Naive thymus-derived CD4-positive, alpha-beta T cell (primary cell): ENCODE measurements at regions of chr12 and their contacts with region 1.

Region 1: GRCh38 chr12:69738351-69739286 is at the start of gene RAB3IP:
- DNase-seq: peak; percentile 85 to 97 (median 90)
- ATAC-seq: peak; percentile 96
- H3K4me3 ChIP-seq: peak within 1 kb of the TSS; percentile 82
- H3K4me3 Mint-ChIP-seq: peak within 1 kb of the TSS; percentile 84 to 95 (median 89)
- H3K27ac ChIP-seq: peak within 1 kb of the TSS; percentile 78
- H3K27ac Mint-ChIP-seq: peak within 1 kb of the TSS; percentile 71 to 92 (median 81)
- H3K4me1 ChIP-seq: peaks cover 0 to 8% of the 10 kb centered on the region in 2 donors
- H3K4me1 Mint-ChIP-seq: peaks cover 14 to 37% (median 30%) of the 10 kb centered on the region in 7 donors
- H3K27me3 ChIP-seq: no peaks in the 10 kb centered on the region
- H3K27me3 Mint-ChIP-seq: peaks cover 0 to 40% (median 6%) of the 10 kb centered on the region in 5 donors
- total RNA-seq, gene RAB3IP: 23.5 to 29.7 (median 23.7) TPM

Region 2: DNA sequence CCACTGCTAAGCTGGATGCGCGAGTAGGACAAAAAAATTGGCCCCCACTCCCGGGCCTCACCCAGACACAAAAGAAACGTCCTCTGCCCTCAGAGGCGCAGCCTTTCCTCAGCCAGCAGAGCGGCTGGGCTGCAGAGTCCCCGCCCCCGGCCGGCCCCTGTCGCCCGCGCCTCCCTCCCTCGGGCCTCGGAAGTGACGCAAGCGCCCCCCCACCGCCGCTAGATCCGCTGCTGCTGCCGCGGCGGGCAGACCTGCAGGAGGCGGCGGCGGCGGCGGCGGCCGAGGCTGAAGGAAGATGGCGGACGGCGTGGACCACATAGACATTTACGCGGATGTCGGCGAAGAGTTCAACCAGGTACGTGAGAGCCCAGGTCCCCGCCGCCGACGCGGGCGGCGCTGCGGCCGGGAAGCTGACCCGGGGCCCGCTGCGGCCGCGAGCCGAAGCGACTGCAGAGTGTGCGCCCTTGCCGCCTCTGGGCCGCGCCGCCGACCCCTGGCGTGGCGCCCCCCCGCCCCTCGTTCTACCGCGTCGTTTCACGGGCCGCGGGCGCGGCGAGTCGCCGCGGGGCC is 499.2 kb before region 1 on chr12 and contains the start of gene CPSF6:
- CTCF ChIA-PET with region 1: interaction called, 3 read pairs
- POLR2A ChIA-PET with region 1: no interaction called
- intact Hi-C with region 1: loop called (anchors 1 to 2 kb)
- DNase-seq: peak; percentile 93 to 97 (median 95)
- ATAC-seq: peak; percentile 96
- H3K4me3 ChIP-seq: peak within 1 kb of the TSS; percentile 86
- H3K4me3 Mint-ChIP-seq: peak within 1 kb of the TSS; percentile 94 to 100 (median 98)
- H3K27ac ChIP-seq: peak within 1 kb of the TSS; percentile 90
- H3K27ac Mint-ChIP-seq: peak within 1 kb of the TSS; percentile 96 to 100 (median 99)
- H3K4me1 ChIP-seq: peaks cover 32 to 37% of the 10 kb centered on the region in 2 donors
- H3K4me1 Mint-ChIP-seq: peaks cover 32 to 58% (median 54%) of the 10 kb centered on the region in 7 donors
- H3K27me3 ChIP-seq: no peaks in the 10 kb centered on the region
- H3K27me3 Mint-ChIP-seq: no peaks in the 10 kb centered on the region
- total RNA-seq, gene CPSF6: 86.8 to 127 (median 96.5) TPM

Region 3: DNA sequence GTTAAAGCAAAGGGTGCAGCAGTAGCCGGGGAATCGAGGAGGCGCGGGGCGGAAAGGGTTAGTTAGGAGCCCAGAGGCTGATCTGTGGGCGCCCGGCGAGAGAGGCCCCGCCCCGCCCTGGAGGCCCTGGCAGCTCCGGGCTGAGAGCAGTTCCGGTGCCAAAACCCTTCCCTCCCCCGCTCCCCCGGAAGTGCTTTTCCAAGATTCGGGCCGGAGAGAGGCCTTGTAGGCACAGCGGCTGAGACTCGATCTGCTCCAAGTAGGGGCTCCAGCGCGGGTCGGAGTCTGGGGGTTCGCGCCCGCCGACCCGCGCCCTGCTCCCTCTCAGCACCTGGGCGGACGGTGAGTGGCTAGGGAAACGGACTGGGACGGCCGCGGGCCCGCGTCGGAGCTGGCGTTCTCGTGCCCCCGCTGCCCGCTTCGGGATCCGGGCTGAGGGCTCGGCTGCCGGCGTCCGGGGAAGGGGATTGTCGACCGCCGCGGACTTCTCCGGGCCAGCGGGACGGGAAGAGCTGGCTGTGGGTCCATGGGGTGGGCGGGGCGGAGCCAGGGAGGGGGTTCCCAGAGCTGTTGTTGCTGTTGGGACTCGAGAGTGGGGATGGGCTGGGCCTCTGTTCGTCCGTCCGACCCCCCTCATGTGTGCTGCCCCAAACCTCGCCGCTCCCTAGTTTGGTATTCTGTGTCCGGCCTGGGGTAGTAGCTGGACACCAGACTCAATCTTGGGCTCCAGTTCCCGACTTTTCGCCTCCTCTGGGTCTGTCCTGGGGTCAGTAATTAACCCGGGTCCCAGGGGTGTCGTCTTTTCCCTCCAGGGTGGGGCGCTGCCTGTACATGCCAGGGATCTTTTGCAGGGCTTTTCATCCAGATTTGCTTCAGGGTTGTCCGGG is 268.2 kb before region 1 on chr12 and contains the start of gene FRS2:
- CTCF ChIA-PET with region 1: no interaction called
- POLR2A ChIA-PET with region 1: no interaction called
- intact Hi-C with region 1: loop called (anchors 1 kb)
- DNase-seq: peak; percentile 66 to 87 (median 81)
- ATAC-seq: peak; percentile 99
- H3K4me3 ChIP-seq: peak within 1 kb of the TSS; percentile 80
- H3K4me3 Mint-ChIP-seq: peak within 1 kb of the TSS; percentile 91 to 100 (median 96)
- H3K27ac ChIP-seq: peak within 1 kb of the TSS; percentile 94
- H3K27ac Mint-ChIP-seq: peak within 1 kb of the TSS; percentile 91 to 99 (median 97)
- H3K4me1 ChIP-seq: peaks cover 11 to 12% of the 10 kb centered on the region in 2 donors
- H3K4me1 Mint-ChIP-seq: peaks cover 41 to 60% (median 51%) of the 10 kb centered on the region in 7 donors
- H3K27me3 ChIP-seq: no peaks in the 10 kb centered on the region
- H3K27me3 Mint-ChIP-seq: no peaks in the 10 kb centered on the region
- total RNA-seq, gene FRS2: 17.5 to 30.1 (median 24.0) TPM

Region 4: DNA sequence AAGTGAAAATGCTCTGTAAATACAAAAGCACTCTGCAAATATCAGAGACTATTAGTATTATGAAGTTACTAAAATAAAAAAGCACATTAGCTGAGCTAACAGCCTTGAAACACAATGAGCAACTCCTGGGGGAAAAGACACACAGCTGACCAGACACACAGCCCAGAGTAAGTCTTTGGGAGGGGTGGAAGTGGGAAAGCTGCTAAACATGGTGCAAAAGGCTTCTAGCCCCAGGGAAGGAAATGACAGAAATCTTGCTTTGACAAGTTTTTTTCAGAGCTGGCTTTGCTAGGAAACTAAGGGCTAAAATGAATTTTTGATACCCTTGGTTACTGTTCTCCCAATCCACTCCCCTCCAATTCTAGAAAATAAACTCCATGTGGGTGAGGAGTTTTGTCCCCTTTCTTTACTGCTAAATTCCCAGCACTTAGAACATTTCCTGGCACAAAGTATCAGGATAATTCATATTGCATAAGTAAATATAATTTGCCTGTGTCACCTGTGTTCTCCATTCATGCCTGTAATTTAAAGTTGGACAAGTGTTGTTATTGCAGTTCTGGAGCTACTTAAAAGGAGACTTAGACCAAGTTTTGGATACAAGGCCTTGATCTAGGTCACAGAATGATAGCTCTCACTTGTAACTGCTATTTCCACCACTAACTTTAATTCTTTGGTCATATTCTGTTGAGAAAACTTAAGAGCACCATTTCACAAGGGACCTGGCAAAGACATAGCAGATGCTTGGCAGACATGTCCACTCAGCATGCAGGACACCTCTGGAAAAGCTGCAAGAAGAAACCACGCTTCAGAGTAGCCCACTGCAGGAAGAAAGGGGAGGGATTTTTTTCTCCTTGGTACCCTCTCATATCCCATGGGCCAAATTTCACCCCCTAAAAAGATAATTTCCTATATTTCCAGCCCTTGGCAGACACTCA is 19.0 kb before region 1 on chr12:
- CTCF ChIA-PET with region 1: no interaction called
- POLR2A ChIA-PET with region 1: no interaction called
- intact Hi-C with region 1: no loop called
- DNase-seq: no peak
- ATAC-seq: no peak
- H3K4me3 ChIP-seq: no peak overlapping the region
- H3K4me3 Mint-ChIP-seq: no peak overlapping the region
- H3K27ac ChIP-seq: no peak overlapping the region
- H3K27ac Mint-ChIP-seq: no peak overlapping the region
- H3K4me1 ChIP-seq: no peaks in the 10 kb centered on the region
- H3K4me1 Mint-ChIP-seq: no peaks in the 10 kb centered on the region
- H3K27me3 ChIP-seq: no peaks in the 10 kb centered on the region
- H3K27me3 Mint-ChIP-seq: peaks cover 6 to 31% (median 17%) of the 10 kb centered on the region in 5 donors

Region 5: GRCh38 chr12:69879041-69879960 is 140.7 kb after region 1 on chr12:
- CTCF ChIA-PET with region 1: no interaction called
- POLR2A ChIA-PET with region 1: no interaction called
- intact Hi-C with region 1: loop called in 1 of 2 experiments (anchors 2 kb)
- DNase-seq: peak; percentile 25 to 64 (median 57)
- ATAC-seq: peak; percentile 94
- H3K4me3 ChIP-seq: no peak overlapping the region
- H3K4me3 Mint-ChIP-seq: peak overlapping the region in 1 of 10 donors; percentile 11
- H3K27ac ChIP-seq: no peak overlapping the region
- H3K27ac Mint-ChIP-seq: no peak overlapping the region
- H3K4me1 ChIP-seq: no peaks in the 10 kb centered on the region
- H3K4me1 Mint-ChIP-seq: peaks cover 0 to 8% (median 4%) of the 10 kb centered on the region in 7 donors
- H3K27me3 ChIP-seq: no peaks in the 10 kb centered on the region
- H3K27me3 Mint-ChIP-seq: peaks cover 14 to 35% (median 26%) of the 10 kb centered on the region in 5 donors

Region 6: GRCh38 chr12:70002097-70002911 is 263.7 kb after region 1 on chr12:
- CTCF ChIA-PET with region 1: no interaction called
- POLR2A ChIA-PET with region 1: no interaction called
- intact Hi-C with region 1: no loop called
- DNase-seq: no peak
- ATAC-seq: no peak
- H3K4me3 ChIP-seq: no peak overlapping the region
- H3K4me3 Mint-ChIP-seq: no peak overlapping the region
- H3K27ac ChIP-seq: no peak overlapping the region
- H3K27ac Mint-ChIP-seq: no peak overlapping the region
- H3K4me1 ChIP-seq: no peaks in the 10 kb centered on the region
- H3K4me1 Mint-ChIP-seq: no peaks in the 10 kb centered on the region
- H3K27me3 ChIP-seq: no peaks in the 10 kb centered on the region
- H3K27me3 Mint-ChIP-seq: peaks cover 0 to 14% (median 9%) of the 10 kb centered on the region in 5 donors

Region 7: GRCh38 chr12:71663561-71664294 is 1925.1 kb after region 1 on chr12 and contains the start of gene ZFC3H1:
- CTCF ChIA-PET with region 1: no interaction called
- POLR2A ChIA-PET with region 1: no interaction called
- intact Hi-C with region 1: loop called in 1 of 2 experiments (anchors 1 kb)
- DNase-seq: peak; percentile 78 to 97 (median 95)
- ATAC-seq: peak; percentile 87
- H3K4me3 ChIP-seq: peak within 1 kb of the TSS; percentile 76
- H3K4me3 Mint-ChIP-seq: peak within 1 kb of the TSS; percentile 94 to 100 (median 99)
- H3K27ac ChIP-seq: peak within 1 kb of the TSS; percentile 97
- H3K27ac Mint-ChIP-seq: peak within 1 kb of the TSS; percentile 96 to 100 (median 99)
- H3K4me1 ChIP-seq: peaks cover 25 to 29% of the 10 kb centered on the region in 2 donors
- H3K4me1 Mint-ChIP-seq: peaks cover 34 to 70% (median 60%) of the 10 kb centered on the region in 7 donors
- H3K27me3 ChIP-seq: no peaks in the 10 kb centered on the region
- H3K27me3 Mint-ChIP-seq: no peaks in the 10 kb centered on the region
- total RNA-seq, gene ZFC3H1: 74.6 to 147 (median 133) TPM